Sigmoid colon (tissue), 7 donors: ENCODE measurements at regions of chr6 and their contacts with region 1.

Region 1: DNA sequence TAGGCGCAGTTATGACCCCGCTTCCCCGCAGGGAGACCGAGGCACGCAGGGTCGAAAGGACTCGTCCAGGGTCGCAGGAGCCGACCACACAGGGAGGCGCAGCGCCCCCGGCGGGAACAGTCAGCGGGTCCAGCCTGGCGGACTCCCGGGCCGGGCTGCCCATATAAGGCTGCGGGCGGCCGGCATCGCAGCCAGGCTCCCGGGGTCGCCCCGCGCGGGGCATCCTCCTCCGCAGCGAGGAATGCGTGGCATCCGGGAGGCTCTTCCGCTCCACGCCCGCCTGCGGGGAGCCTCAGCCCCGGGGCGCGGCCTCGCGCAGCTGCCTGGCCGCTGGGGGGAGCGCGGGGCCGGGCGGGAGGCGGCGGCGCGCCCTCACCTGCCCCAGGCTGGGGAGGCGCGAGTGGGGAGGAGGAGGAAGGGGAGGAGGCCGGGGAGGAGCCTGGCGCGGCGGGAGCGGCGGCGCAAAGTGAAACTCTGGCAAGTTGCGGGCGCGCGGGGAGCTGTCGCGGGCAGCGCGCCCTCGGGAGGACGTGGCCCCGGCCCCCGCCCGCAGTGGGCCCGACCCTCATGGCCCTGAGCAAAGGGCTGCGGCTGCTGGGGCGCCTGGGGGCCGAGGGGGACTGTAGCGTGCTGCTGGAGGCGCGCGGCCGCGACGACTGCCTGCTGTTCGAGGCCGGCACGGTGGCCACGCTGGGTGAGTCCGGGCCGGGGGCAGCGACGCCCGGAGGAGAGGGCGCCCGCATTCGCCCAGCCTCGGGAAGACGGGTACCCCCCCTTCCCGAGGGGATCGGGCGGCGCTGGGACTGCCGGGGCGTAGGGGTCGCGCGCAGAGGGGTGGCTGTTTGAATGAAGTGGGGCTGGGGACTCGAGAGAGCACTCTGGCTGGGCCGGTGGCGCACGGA is at the start of gene SYNJ2:
- DNase-seq: peak; percentile 91
- H3K4me3 ChIP-seq: peak within 1 kb of the TSS; percentile 72 to 99 (median 82)
- H3K27ac ChIP-seq: peak within 1 kb of the TSS; percentile 83 to 94 (median 86)
- H3K4me1 ChIP-seq: peaks cover 0 to 48% (median 32%) of the 10 kb centered on the region in 4 donors
- H3K27me3 ChIP-seq: no peaks in the 10 kb centered on the region
- CTCF ChIP-seq: peak; percentile 25 to 77 (median 66)
- EP300 ChIP-seq: no peak
- POLR2A ChIP-seq: no peak
- total RNA-seq, gene SYNJ2: 8.7 to 22.9 (median 12.3) TPM

Region 2: GRCh38 chr6:158018851-158019361 is 37.3 kb after region 1 on chr6:
- intact Hi-C with region 1: loop called (anchors 5 kb)
- DNase-seq: no peak
- H3K4me3 ChIP-seq: no peak overlapping the region
- H3K27ac ChIP-seq: peak overlapping the region; percentile 61 to 85 (median 79)
- H3K4me1 ChIP-seq: peaks cover 0 to 22% (median 19%) of the 10 kb centered on the region in 4 donors
- H3K27me3 ChIP-seq: no peaks in the 10 kb centered on the region
- CTCF ChIP-seq: no peak
- EP300 ChIP-seq: peak in 1 of 4 donors; percentile 38
- POLR2A ChIP-seq: no peak

Region 3: GRCh38 chr6:158042245-158042798 is 60.7 kb after region 1 on chr6:
- intact Hi-C with region 1: loop called (anchors 2 kb)
- DNase-seq: peak; percentile 79
- H3K4me3 ChIP-seq: no peak overlapping the region
- H3K27ac ChIP-seq: peak overlapping the region; percentile 77 to 88 (median 78)
- H3K4me1 ChIP-seq: peaks cover 0 to 69% (median 52%) of the 10 kb centered on the region in 4 donors
- H3K27me3 ChIP-seq: no peaks in the 10 kb centered on the region
- CTCF ChIP-seq: no peak
- EP300 ChIP-seq: peak in 2 of 4 donors; percentile 35 to 55
- POLR2A ChIP-seq: no peak

Region 4: GRCh38 chr6:158072083-158072721 is 90.6 kb after region 1 on chr6:
- intact Hi-C with region 1: loop called (anchors 2 kb)
- DNase-seq: peak; percentile 87
- H3K4me3 ChIP-seq: no peak overlapping the region
- H3K27ac ChIP-seq: peak overlapping the region in 1 of 4 donors; percentile 26
- H3K4me1 ChIP-seq: peaks cover 0 to 7% (median 0%) of the 10 kb centered on the region in 4 donors
- H3K27me3 ChIP-seq: no peaks in the 10 kb centered on the region
- CTCF ChIP-seq: peak; percentile 76 to 81 (median 80)
- EP300 ChIP-seq: no peak
- POLR2A ChIP-seq: no peak

Region 5: GRCh38 chr6:158168040-158168289 is 186.3 kb after region 1 on chr6 and contains the start of gene SERAC1:
- intact Hi-C with region 1: loop called (anchors 5 kb)
- DNase-seq: no peak
- H3K4me3 ChIP-seq: peak within 1 kb of the TSS; percentile 59 to 97 (median 88)
- H3K27ac ChIP-seq: peak within 1 kb of the TSS; percentile 92 to 97 (median 96)
- H3K4me1 ChIP-seq: peaks cover 0 to 37% (median 18%) of the 10 kb centered on the region in 4 donors
- H3K27me3 ChIP-seq: no peaks in the 10 kb centered on the region
- CTCF ChIP-seq: no peak
- EP300 ChIP-seq: no peak
- POLR2A ChIP-seq: no peak
- total RNA-seq, gene SERAC1: 9.6 to 15.0 (median 12.5) TPM